CD4-positive, alpha-beta memory T cell (primary cell): ENCODE measurements at regions of chr13 and their contacts with region 1.

Region 1: DNA sequence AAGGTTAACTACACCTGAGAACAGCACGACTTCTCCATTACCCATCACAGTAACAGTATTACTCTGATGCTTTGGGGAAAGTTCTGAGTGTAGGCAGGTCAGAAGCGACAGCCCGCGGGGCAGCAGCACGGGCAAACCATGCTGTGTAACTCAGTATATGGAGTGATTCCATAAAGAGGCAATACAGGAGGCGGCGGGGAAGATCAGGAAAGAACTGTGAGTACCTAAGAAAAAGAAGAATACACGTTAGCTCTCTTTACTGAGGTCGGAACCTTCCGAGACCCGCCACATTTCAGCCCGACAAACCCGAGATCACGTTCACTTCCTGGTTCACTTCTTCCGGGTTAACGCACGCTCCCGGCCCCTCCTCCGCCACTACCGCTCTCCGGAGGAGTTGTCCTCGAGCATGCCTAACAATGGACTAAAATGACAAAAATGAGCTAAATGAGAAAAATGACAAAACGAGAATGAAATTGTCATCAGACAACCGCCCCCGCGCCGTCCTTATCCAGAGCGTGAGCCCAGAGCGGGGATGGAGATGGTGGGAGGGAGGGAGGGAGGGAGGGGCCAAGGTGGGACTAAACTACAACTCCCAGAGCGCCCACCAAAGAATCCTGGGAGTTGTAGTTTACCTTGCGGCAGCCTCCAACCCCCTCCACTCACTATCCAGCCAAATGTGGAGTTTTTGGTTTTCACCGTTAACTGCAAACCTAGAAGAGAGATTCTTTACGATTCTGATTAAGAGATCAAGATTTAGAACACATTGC is at the start of gene MTRF1:
- DNase-seq: peak; percentile 86 to 89 (median 87)
- H3K4me3 ChIP-seq: peak within 1 kb of the TSS; percentile 80 to 82
- H3K4me3 Mint-ChIP-seq: peak within 1 kb of the TSS; percentile 94 to 99 (median 98)
- H3K27ac ChIP-seq: peak within 1 kb of the TSS; percentile 67
- H3K27ac Mint-ChIP-seq: peak within 1 kb of the TSS; percentile 88 to 99 (median 98)
- H3K4me1 ChIP-seq: peaks cover 19% of the 10 kb centered on the region
- H3K4me1 Mint-ChIP-seq: peaks cover 13 to 18% (median 15%) of the 10 kb centered on the region in 4 donors
- H3K27me3 ChIP-seq: no peaks in the 10 kb centered on the region
- H3K27me3 Mint-ChIP-seq: no peaks in the 10 kb centered on the region
- total RNA-seq, gene MTRF1: 29.5 to 30.1 TPM

Region 2: GRCh38 chr13:41132512-41133152 is 130.8 kb before region 1 on chr13 and contains the start of gene KBTBD6:
- CTCF ChIA-PET with region 1: no interaction called
- POLR2A ChIA-PET with region 1: no interaction called
- intact Hi-C with region 1: loop called (anchors 1 kb)
- DNase-seq: peak; percentile 89 to 95 (median 90)
- H3K4me3 ChIP-seq: peak within 1 kb of the TSS; percentile 56
- H3K4me3 Mint-ChIP-seq: peak within 1 kb of the TSS; percentile 95 to 100 (median 99)
- H3K27ac ChIP-seq: peak within 1 kb of the TSS; percentile 63
- H3K27ac Mint-ChIP-seq: peak within 1 kb of the TSS; percentile 91 to 98 (median 98)
- H3K4me1 ChIP-seq: peaks cover 49% of the 10 kb centered on the region
- H3K4me1 Mint-ChIP-seq: peaks cover 39 to 55% (median 46%) of the 10 kb centered on the region in 4 donors
- H3K27me3 ChIP-seq: no peaks in the 10 kb centered on the region
- H3K27me3 Mint-ChIP-seq: no peaks in the 10 kb centered on the region
- total RNA-seq, gene KBTBD6: 9.9 to 10.5 TPM

Region 3: GRCh38 chr13:41193919-41194824 is 69.3 kb before region 1 on chr13 and contains the start of gene KBTBD7:
- CTCF ChIA-PET with region 1: no interaction called
- POLR2A ChIA-PET with region 1: interaction called, 7 read pairs
- intact Hi-C with region 1: loop called (anchors 1 kb)
- DNase-seq: peak; percentile 83 to 90 (median 86)
- H3K4me3 ChIP-seq: peak within 1 kb of the TSS; percentile 18 to 94
- H3K4me3 Mint-ChIP-seq: peak within 1 kb of the TSS; percentile 93 to 97 (median 94)
- H3K27ac ChIP-seq: peak within 1 kb of the TSS; percentile 72
- H3K27ac Mint-ChIP-seq: peak within 1 kb of the TSS; percentile 72 to 97 (median 92)
- H3K4me1 ChIP-seq: peaks cover 29% of the 10 kb centered on the region
- H3K4me1 Mint-ChIP-seq: peaks cover 23 to 45% (median 33%) of the 10 kb centered on the region in 4 donors
- H3K27me3 ChIP-seq: no peaks in the 10 kb centered on the region
- H3K27me3 Mint-ChIP-seq: no peaks in the 10 kb centered on the region
- total RNA-seq, gene KBTBD7: 11.1 to 11.8 TPM

Region 4: DNA sequence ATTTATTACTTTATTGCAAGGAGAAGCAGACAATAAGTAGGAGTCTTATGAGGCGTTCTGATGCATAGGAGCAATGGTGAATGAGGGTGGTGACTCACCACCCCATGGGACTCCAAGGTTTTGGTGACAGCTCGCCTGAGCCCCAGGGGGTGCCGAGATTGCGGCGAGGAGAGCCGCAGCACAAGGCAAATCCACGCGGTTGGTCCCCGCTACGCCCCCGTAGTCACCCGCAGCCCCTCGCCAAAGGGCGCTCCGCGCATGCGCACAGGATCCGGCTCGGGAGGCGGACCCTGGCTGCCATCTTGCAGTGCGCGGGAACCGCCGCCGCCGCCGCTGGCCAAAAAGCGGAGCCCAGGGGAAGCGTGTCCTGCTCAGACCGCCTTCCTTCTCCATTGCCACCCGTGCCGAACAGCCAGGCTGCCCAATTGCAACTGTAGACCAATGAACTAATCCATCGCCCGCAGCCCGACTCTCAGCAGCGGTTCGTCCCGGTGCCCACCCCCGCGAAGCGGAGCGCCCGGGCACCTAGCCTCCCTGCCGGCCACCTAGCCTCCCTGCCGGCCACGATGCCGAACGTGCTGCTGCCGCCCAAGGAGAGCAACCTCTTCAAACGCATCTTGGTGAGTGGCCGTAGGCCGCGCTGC is 47.6 kb after region 1 on chr13 and contains the start of gene NAA16:
- CTCF ChIA-PET with region 1: no interaction called
- POLR2A ChIA-PET with region 1: interaction called, 6 read pairs
- intact Hi-C with region 1: loop called (anchors 1 kb)
- DNase-seq: peak; percentile 92 to 94 (median 93)
- H3K4me3 ChIP-seq: peak within 1 kb of the TSS; percentile 85 to 94
- H3K4me3 Mint-ChIP-seq: peak within 1 kb of the TSS; percentile 94 to 97 (median 96)
- H3K27ac ChIP-seq: peak within 1 kb of the TSS; percentile 83
- H3K27ac Mint-ChIP-seq: peak within 1 kb of the TSS; percentile 94 to 96 (median 96)
- H3K4me1 ChIP-seq: peaks cover 45% of the 10 kb centered on the region
- H3K4me1 Mint-ChIP-seq: peaks cover 22 to 46% (median 36%) of the 10 kb centered on the region in 4 donors
- H3K27me3 ChIP-seq: no peaks in the 10 kb centered on the region
- H3K27me3 Mint-ChIP-seq: no peaks in the 10 kb centered on the region
- total RNA-seq, gene NAA16: 62.3 to 62.5 TPM

Region 5: GRCh38 chr13:41443966-41444365 is 180.5 kb after region 1 on chr13:
- CTCF ChIA-PET with region 1: no interaction called
- POLR2A ChIA-PET with region 1: no interaction called
- intact Hi-C with region 1: no loop called
- DNase-seq: no peak
- H3K4me3 ChIP-seq: no peak overlapping the region
- H3K4me3 Mint-ChIP-seq: no peak overlapping the region
- H3K27ac ChIP-seq: no peak overlapping the region
- H3K27ac Mint-ChIP-seq: no peak overlapping the region
- H3K4me1 ChIP-seq: no peaks in the 10 kb centered on the region
- H3K4me1 Mint-ChIP-seq: peaks cover 0 to 3% (median 0%) of the 10 kb centered on the region in 4 donors
- H3K27me3 ChIP-seq: no peaks in the 10 kb centered on the region
- H3K27me3 Mint-ChIP-seq: no peaks in the 10 kb centered on the region

Region 6: GRCh38 chr13:42039946-42040729 is 776.7 kb after region 1 on chr13:
- CTCF ChIA-PET with region 1: no interaction called
- POLR2A ChIA-PET with region 1: no interaction called
- intact Hi-C with region 1: loop called (anchors 10 kb)
- DNase-seq: peak; percentile 84 to 87 (median 86)
- H3K4me3 ChIP-seq: peak overlapping the region; percentile 58 to 82
- H3K4me3 Mint-ChIP-seq: peak overlapping the region; percentile 84 to 94 (median 92)
- H3K27ac ChIP-seq: peak overlapping the region; percentile 65
- H3K27ac Mint-ChIP-seq: peak overlapping the region; percentile 86 to 95 (median 89)
- H3K4me1 ChIP-seq: peaks cover 13% of the 10 kb centered on the region
- H3K4me1 Mint-ChIP-seq: peaks cover 17 to 24% (median 19%) of the 10 kb centered on the region in 4 donors
- H3K27me3 ChIP-seq: no peaks in the 10 kb centered on the region
- H3K27me3 Mint-ChIP-seq: no peaks in the 10 kb centered on the region

Region 7: GRCh38 chr13:42271337-42272114 is 1008.1 kb after region 1 on chr13:
- CTCF ChIA-PET with region 1: no interaction called
- POLR2A ChIA-PET with region 1: interaction called, 3 read pairs
- intact Hi-C with region 1: loop called (anchors 10 kb)
- DNase-seq: peak; percentile 95 to 98 (median 96)
- H3K4me3 ChIP-seq: peak overlapping the region; percentile 82 to 93
- H3K4me3 Mint-ChIP-seq: peak overlapping the region; percentile 88 to 99 (median 97)
- H3K27ac ChIP-seq: peak overlapping the region; percentile 94
- H3K27ac Mint-ChIP-seq: peak overlapping the region; percentile 98 to 99 (median 98)
- H3K4me1 ChIP-seq: peaks cover 46% of the 10 kb centered on the region
- H3K4me1 Mint-ChIP-seq: peaks cover 35 to 60% (median 47%) of the 10 kb centered on the region in 4 donors
- H3K27me3 ChIP-seq: no peaks in the 10 kb centered on the region
- H3K27me3 Mint-ChIP-seq: no peaks in the 10 kb centered on the region